HEK293 (cell line): ENCODE measurements at regions of chr19 and their contacts with region 1.

Region 1: DNA sequence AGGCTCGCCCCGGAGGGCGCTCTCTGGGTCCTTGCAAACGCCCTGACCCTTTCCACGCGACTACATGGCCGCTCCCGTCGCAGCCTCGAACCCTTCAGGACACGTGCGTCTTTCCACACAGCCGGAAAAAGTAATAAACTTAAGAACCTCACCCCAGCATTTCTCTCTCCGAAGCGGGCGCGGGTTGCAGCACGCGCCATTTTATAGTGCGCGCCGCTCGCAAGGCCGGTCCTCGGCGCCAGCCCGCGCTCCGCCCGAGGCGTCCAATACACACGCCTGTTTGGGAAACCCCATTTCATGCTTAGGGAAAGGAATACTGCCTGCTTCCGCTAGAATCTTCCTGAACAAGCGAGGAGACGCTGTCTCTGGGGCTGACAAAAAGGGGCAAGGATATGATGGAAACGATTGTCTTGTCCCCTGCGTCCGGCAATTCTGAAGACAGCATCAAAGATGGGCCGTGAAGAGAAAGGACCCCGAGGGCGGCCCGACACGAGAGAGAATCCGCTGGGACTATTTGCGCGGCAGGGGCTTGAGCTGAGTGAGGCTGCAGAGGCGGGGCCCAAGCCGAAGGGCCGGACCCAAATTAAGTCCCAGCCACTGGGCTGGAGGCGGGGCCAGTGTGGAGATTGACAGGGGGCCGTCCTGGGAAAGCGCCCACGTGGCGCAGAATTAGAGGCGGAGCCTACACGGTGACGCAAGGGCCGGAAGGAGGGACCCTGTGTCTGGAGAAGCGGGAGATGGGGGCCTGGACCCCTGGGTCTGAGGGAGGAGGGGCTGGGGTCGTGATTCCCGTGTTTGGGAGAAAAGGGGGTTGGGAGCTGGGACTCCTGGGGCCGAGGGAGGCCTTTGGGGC is 14.4 kb downstream of the ACP4 start:
- H3K4me3 ChIP-seq: peak overlapping the region; percentile 79
- H3K27ac ChIP-seq: peak overlapping the region; percentile 99
- H3K4me1 ChIP-seq: peaks cover 11% of the 10 kb centered on the region
- CTCF ChIP-seq: no peak

Region 2: GRCh38 chr19:50724522-50725217 is 80.0 kb before region 1 on chr19:
- CTCF ChIA-PET with region 1: no interaction called
- POLR2A ChIA-PET with region 1: interaction called, 16 read pairs
- H3K4me3 ChIP-seq: peak overlapping the region; percentile 78
- H3K27ac ChIP-seq: peak overlapping the region; percentile 77
- H3K4me1 ChIP-seq: peaks cover 7% of the 10 kb centered on the region; the same call in 1 of the 2 replicates
- CTCF ChIP-seq: peak; percentile 100

Region 3: GRCh38 chr19:50794439-50795237 is 10.0 kb before region 1 on chr19:
- CTCF ChIA-PET with region 1: no interaction called
- POLR2A ChIA-PET with region 1: interaction called, 85 read pairs
- H3K4me3 ChIP-seq: no peak overlapping the region
- H3K27ac ChIP-seq: no peak overlapping the region; the same call in 1 of the 2 replicates
- H3K4me1 ChIP-seq: peaks cover 4% of the 10 kb centered on the region; the same call in 1 of the 2 replicates
- CTCF ChIP-seq: peak; percentile 77

Region 4: DNA sequence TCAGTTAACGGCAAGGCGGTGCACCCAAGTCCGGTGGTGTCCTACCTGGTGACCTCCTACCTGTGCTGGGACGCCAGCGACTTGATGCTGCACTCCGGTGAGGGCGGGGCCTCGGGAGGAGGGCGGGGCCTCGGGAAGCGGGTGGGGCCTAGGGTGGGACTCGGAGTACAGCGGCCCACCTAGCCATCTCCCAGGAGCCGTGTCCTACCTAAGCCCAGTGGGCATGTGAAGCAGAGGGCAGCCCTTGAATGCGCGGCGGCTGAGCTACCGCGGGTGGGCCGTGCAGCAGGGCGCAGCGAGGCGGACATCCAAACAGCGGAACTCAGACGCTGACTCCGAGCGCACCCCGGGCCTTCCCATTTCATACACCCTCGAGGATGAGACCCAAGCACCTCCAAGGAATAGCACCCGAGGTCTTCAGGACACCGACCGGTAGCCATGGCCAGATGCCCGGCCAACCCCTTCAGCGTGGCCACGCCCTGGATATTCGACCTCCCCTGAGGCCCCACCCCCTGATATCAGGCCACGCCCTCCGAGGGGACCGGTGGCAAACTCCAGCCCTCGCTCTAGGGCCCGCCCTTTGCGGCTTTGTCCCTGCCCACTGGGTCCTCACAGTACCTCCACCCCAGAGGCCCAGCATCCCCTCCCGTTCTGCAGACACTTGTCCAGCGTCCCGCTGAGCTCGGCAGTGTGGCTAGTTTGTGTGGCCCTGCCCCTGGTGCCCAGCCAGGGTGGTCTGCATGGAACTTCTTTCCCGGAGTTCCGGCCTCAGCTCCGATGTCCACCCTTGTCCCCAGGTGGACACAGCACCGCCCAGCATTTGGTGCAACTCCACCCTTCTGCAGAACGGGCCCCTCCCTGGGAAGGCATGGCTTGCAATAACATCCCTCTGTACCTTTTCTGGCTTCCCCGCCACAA is 13.6 kb after region 1 on chr19:
- CTCF ChIA-PET with region 1: no interaction called
- POLR2A ChIA-PET with region 1: interaction called, 23 read pairs
- H3K4me3 ChIP-seq: peak overlapping the region; percentile 50
- H3K27ac ChIP-seq: no peak overlapping the region; the same call in 1 of the 2 replicates
- H3K4me1 ChIP-seq: no peaks in the 10 kb centered on the region
- CTCF ChIP-seq: no peak

Region 5: GRCh38 chr19:50835785-50836542 is 31.3 kb after region 1 on chr19:
- CTCF ChIA-PET with region 1: no interaction called
- POLR2A ChIA-PET with region 1: interaction called, 10 read pairs
- H3K4me3 ChIP-seq: peak overlapping the region; percentile 63
- H3K27ac ChIP-seq: peak overlapping the region; percentile 4; the same call in 1 of the 2 replicates
- H3K4me1 ChIP-seq: no peaks in the 10 kb centered on the region; the same call in 1 of the 2 replicates
- CTCF ChIP-seq: peak; percentile 60

Region 6: GRCh38 chr19:50844296-50844935 is 39.8 kb after region 1 on chr19:
- CTCF ChIA-PET with region 1: no interaction called
- POLR2A ChIA-PET with region 1: interaction called, 19 read pairs
- H3K4me3 ChIP-seq: no peak overlapping the region
- H3K27ac ChIP-seq: no peak overlapping the region
- H3K4me1 ChIP-seq: peaks cover 15% of the 10 kb centered on the region
- CTCF ChIP-seq: no peak